A673 (cell line): ENCODE measurements at regions of chr12 and their contacts with region 1.

Region 1: GRCh38 chr12:15268927-15269552 is 47.8 kb upstream of the RERG start:
- DNase-seq: peak; percentile 83
- H3K4me3 ChIP-seq: no peak overlapping the region
- H3K27ac ChIP-seq: no peak overlapping the region
- H3K4me1 ChIP-seq: no peaks in the 10 kb centered on the region
- H3K27me3 ChIP-seq: no peaks in the 10 kb centered on the region
- CTCF ChIP-seq: peak; percentile 86

Region 2: DNA sequence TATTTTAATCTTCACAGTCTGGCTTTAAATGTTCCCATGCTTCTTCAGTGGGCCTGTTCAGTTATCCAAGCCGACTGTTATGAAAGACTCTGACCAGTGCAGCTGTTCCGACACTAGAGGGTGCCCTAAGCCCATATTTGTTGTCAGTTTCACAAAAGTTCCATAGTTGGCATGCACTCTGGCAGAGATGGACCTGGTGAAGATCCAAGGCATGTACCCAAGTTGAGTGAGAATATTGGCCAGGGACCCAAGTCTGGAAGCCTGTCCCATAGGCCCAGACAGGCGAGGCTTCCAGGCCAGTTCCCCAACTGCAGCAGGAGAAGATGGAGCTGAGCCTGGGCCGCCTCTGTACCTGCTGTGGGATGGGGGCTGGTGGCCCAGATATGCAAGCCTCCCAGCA is 545.3 kb before region 1 on chr12:
- CTCF ChIA-PET with region 1: no interaction called
- POLR2A ChIA-PET with region 1: no interaction called
- intact Hi-C with region 1: loop called (anchors 5 kb)
- DNase-seq: peak; percentile 76
- H3K4me3 ChIP-seq: no peak overlapping the region
- H3K27ac ChIP-seq: no peak overlapping the region
- H3K4me1 ChIP-seq: no peaks in the 10 kb centered on the region
- H3K27me3 ChIP-seq: no peaks in the 10 kb centered on the region
- CTCF ChIP-seq: peak; percentile 73

Region 3: DNA sequence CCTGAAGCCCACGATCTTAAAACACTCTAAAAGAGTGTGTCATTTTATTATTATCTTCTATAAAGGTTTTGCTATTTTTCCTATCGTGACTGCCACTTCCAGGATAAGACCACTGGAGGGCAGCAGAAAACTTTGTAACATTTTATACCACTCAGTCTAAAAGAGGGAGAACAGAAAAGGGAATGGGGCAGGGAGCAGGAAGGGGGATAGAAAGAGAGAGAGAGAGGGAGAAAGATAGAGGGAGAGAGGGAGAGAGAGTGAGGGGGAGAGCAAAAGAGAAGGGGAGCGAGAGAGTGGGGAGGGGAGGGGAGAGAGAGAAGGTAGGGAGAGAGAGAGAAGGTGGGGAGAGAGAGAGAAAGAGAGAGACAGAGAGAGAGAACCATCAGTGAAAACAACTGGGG is 423.7 kb before region 1 on chr12:
- CTCF ChIA-PET with region 1: no interaction called
- POLR2A ChIA-PET with region 1: no interaction called
- intact Hi-C with region 1: loop called (anchors 5 kb)
- DNase-seq: peak; percentile 79
- H3K4me3 ChIP-seq: no peak overlapping the region
- H3K27ac ChIP-seq: no peak overlapping the region
- H3K4me1 ChIP-seq: no peaks in the 10 kb centered on the region
- H3K27me3 ChIP-seq: no peaks in the 10 kb centered on the region
- CTCF ChIP-seq: peak; percentile 84

Region 4: GRCh38 chr12:15151161-15152120 is 117.6 kb before region 1 on chr12:
- CTCF ChIA-PET with region 1: no interaction called
- POLR2A ChIA-PET with region 1: no interaction called
- intact Hi-C with region 1: loop called (anchors 2 kb)
- DNase-seq: peak; percentile 44
- H3K4me3 ChIP-seq: no peak overlapping the region
- H3K27ac ChIP-seq: no peak overlapping the region
- H3K4me1 ChIP-seq: peaks cover 7% of the 10 kb centered on the region
- H3K27me3 ChIP-seq: no peaks in the 10 kb centered on the region
- CTCF ChIP-seq: peak; percentile 64

Region 5: GRCh38 chr12:15227004-15227679 is 41.9 kb before region 1 on chr12:
- CTCF ChIA-PET with region 1: interaction called, 7 read pairs
- POLR2A ChIA-PET with region 1: no interaction called
- intact Hi-C with region 1: loop called (anchors 2 kb)
- DNase-seq: peak; percentile 71
- H3K4me3 ChIP-seq: no peak overlapping the region
- H3K27ac ChIP-seq: no peak overlapping the region
- H3K4me1 ChIP-seq: no peaks in the 10 kb centered on the region
- H3K27me3 ChIP-seq: peaks cover 17% of the 10 kb centered on the region
- CTCF ChIP-seq: peak; percentile 79

Region 6: DNA sequence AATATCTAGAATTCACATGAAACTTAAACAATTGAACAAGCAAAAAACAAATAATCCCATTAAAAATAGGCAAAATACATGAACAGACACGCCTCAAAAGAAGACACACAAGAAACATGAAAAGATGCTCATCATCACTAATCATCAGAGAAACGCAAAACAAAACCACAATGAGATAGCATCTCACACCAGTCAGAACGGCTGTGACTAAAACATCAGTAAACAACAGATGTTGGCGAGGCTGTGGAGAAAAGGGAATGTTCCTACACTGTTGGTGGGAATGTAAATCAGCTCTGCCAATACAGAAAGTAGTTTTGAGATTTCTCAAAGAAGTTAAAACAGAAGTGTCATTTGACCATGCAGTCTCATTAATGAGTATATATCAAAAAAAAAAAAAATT is 174.6 kb after region 1 on chr12:
- CTCF ChIA-PET with region 1: no interaction called
- POLR2A ChIA-PET with region 1: no interaction called
- intact Hi-C with region 1: no loop called
- DNase-seq: no peak
- H3K4me3 ChIP-seq: no peak overlapping the region
- H3K27ac ChIP-seq: no peak overlapping the region
- H3K4me1 ChIP-seq: no peaks in the 10 kb centered on the region
- H3K27me3 ChIP-seq: peaks cover 4% of the 10 kb centered on the region
- CTCF ChIP-seq: no peak